GM12878 (cell line): ENCODE measurements at regions of chr4 and their contacts with region 1.

Region 1: DNA sequence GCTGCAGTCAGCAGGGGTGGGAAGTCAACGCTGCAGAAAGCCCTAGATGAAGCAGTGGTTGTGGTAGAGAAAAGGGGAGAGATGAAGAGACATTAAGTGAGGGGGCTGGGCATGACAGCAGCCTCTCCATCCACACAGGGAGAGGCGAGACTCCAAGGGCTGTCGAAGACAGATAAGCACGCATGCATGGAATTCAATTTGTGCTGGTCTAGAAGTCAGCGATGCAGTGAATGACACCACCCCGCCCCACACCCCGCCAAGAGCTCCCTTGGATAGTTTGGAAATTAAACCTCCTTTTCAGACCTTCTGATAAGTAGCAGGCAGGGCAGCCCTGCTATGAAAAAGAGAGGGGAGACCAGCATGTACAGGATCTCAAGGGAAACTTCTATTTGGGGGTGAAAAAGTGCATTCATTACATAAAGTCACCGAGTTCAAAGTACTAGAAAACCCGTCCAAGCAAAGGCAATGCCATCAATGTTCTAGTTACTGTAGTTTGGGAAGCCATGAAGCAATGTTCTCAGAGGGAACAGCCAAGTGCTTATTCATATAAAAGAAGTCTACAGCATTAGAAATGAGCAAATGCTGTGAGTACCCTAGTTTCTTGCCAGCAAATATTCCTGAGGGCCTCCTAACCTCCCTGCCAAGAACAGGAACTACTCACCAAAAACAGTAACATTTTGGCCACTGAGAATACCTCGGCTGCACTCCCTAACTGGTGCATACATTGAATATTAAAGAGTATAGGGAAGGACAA is 152.3 kb upstream of the ANXA10 start:
- DNase-seq: no peak
- ATAC-seq: no peak
- H3K4me3 ChIP-seq: no peak overlapping the region
- H3K27ac ChIP-seq: no peak overlapping the region
- H3K4me1 ChIP-seq: no peaks in the 10 kb centered on the region
- H3K27me3 ChIP-seq: no peaks in the 10 kb centered on the region
- CTCF ChIP-seq: no peak
- EP300 ChIP-seq: no peak
- POLR2A ChIP-seq: no peak
- RAD21 ChIP-seq: no peak

Region 2: DNA sequence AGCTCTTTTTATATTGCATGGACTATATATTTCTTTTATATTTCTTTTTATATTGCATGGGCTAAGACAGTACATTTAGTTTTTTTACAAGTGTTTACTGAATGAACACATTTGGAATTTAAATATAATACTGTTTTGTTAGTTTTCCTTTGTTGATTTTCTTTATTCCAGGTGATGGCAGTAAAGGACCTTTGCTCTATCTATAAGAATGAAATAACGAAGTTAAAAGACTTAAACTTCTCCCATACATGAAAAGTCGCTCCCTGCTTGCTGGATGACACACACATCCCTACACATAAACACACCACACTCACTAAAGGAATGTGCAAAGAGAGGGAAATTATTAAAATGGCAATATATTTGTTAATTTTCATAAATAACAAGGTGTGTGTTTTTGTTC is 49.8 kb after region 1 on chr4:
- CTCF ChIA-PET with region 1: no interaction called
- POLR2A ChIA-PET with region 1: no interaction called
- RAD21 ChIA-PET with region 1: no interaction called
- SMC1A ChIA-PET with region 1: no interaction called
- in situ Hi-C with region 1: loop called (anchors 10 kb)
- intact Hi-C with region 1: no loop called
- DNase-seq: no peak
- ATAC-seq: no peak
- H3K4me3 ChIP-seq: no peak overlapping the region
- H3K27ac ChIP-seq: no peak overlapping the region
- H3K4me1 ChIP-seq: no peaks in the 10 kb centered on the region
- H3K27me3 ChIP-seq: no peaks in the 10 kb centered on the region
- CTCF ChIP-seq: no peak; a peak in 1 of 6 replicates
- EP300 ChIP-seq: no peak
- POLR2A ChIP-seq: no peak
- RAD21 ChIP-seq: no peak

Region 3: DNA sequence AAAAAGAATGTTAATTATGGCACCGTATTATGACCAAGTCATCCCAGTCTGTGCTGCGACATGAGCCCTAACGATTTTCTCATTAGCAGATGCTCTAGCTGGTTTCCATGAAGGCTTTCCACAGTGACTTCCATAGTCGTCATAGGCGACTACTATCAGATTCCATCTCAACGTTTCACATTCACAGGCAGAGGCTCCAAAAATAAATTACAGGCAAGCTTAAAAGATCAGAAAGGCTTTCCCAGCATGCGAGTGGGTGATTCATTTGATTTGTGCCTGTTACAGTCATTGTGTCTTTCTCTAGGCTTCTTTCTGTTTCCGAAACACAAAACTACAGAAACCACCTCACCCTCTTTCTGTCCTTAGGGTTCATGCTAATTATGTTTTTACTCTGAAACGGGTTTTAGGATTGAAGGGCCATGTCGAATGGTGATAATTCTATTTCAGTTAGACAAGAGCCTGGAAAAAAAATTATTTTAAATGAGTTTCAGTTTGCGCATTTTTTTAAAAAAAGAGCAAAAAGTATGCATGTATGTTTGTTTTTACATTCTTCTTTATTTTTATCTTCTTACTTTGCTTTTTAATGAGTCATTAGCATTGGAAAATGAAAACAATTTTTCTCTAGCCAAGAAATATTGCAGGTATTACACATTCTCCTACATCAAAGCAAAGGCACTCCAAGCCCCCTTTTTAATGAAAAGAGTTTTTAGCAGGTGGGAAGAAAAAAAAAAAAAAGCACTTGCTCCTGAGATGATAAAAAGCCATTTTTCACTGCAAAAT is 600.2 kb after region 1 on chr4:
- CTCF ChIA-PET with region 1: no interaction called
- POLR2A ChIA-PET with region 1: no interaction called
- RAD21 ChIA-PET with region 1: no interaction called
- SMC1A ChIA-PET with region 1: no interaction called
- in situ Hi-C with region 1: no loop called
- intact Hi-C with region 1: no loop called
- DNase-seq: no peak
- ATAC-seq: no peak
- H3K4me3 ChIP-seq: no peak overlapping the region
- H3K27ac ChIP-seq: no peak overlapping the region
- H3K4me1 ChIP-seq: no peaks in the 10 kb centered on the region
- H3K27me3 ChIP-seq: no peaks in the 10 kb centered on the region
- CTCF ChIP-seq: no peak
- EP300 ChIP-seq: no peak
- POLR2A ChIP-seq: no peak
- RAD21 ChIP-seq: no peak